Activated T-helper 1 cell treated with anti-CD3 and anti-CD28 coated beads, Interleukin-12 subunit alpha, Interleukin-12 subunit beta, Interleukin-2, Interleukin-4 antibody, amounts not matched to agents 30 ng/mL and 10 ng/mL and 1 ng/mL, durations not matched to agents 14 hours and 24 hours and 36 hours (primary cell): ENCODE measurements at regions of chr1 and their contacts with region 1.

Region 1: GRCh38 chr1:111592389-111593361 is 26.9 kb upstream of the RAP1A start:
- DNase-seq: peak; percentile 84
- H3K4me3 Mint-ChIP-seq: peak overlapping the region; percentile 25
- H3K27ac Mint-ChIP-seq: peak overlapping the region; percentile 91
- H3K4me1 Mint-ChIP-seq: peaks cover 76% of the 10 kb centered on the region
- H3K27me3 Mint-ChIP-seq: peaks cover 2% of the 10 kb centered on the region

Region 2: DNA sequence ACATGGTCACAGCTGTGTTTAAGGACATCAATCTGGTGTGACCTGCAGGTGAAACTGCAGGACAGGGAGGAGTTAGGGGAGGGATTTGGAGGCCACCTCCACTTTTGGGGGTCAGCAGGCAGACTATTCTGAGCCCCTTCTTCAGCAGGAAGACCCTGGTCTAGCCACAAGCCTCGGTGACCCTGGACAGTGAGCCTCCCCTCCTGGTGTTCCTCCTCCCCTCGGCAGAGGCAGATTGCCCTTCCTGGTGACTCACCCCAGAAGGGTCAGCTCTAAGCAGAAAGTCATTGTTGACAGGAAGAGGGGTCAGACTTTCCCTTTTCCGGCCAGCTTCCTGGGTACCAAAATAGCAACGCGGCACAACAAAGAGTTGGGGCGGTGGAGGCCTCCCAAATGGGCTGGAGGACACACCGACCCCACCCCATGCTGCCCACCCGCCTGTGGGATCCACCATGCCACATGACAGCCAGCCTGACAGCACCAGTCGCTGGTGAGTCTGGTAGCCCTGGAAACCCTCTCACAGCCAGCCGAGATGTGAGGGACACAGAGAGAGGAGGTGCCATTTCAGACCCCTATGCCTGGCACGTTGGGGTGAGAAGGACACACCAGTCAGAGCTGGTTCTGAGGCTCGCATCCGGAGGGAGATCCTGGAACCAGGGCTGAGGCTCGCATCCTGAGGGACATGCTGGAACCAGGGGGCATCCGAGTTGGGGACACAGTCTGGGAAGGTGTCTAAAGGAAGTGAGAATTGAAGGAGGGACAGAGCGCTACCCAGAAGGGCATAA is 1696.8 kb before region 1 on chr1:
- intact Hi-C with region 1: loop called (anchors 10 kb)
- DNase-seq: peak; percentile 30
- H3K4me3 Mint-ChIP-seq: no peak overlapping the region
- H3K27ac Mint-ChIP-seq: no peak overlapping the region
- H3K4me1 Mint-ChIP-seq: peaks cover 5% of the 10 kb centered on the region
- H3K27me3 Mint-ChIP-seq: no peaks in the 10 kb centered on the region

Region 3: GRCh38 chr1:111214074-111214801 is 378.4 kb before region 1 on chr1:
- intact Hi-C with region 1: loop called (anchors 2 kb)
- DNase-seq: no peak
- H3K4me3 Mint-ChIP-seq: peak overlapping the region; percentile 64
- H3K27ac Mint-ChIP-seq: peak overlapping the region; percentile 94
- H3K4me1 Mint-ChIP-seq: peaks cover 78% of the 10 kb centered on the region
- H3K27me3 Mint-ChIP-seq: no peaks in the 10 kb centered on the region

Region 4: DNA sequence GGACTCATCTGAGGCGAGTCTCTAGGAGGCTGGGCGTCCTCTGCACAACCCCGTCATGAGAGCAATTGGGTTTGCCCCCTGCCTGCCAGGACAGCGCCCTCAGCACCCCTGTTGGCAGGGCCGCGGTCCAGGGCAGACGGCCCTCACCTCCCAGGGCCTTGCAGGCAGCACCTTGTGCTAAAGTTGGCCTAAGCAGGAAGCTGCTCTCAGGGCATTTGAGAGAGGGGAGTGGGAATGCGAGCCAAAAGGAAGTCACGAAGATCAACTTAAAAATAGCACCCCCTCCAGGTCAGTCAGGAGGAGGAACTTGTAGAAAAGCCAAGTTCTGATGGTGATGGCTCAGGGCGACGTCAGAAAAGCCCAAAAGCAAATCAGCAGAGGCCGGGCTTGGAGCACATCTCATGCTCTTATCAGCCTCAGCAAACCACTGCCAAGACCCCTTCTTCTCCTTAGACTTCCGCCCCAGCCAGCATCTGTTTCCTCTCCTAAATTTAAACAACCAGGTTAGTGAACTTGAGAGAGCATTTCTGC is 76.6 kb before region 1 on chr1:
- intact Hi-C with region 1: loop called (anchors 1 kb)
- DNase-seq: no peak
- H3K4me3 Mint-ChIP-seq: peak overlapping the region; percentile 13
- H3K27ac Mint-ChIP-seq: peak overlapping the region; percentile 63
- H3K4me1 Mint-ChIP-seq: peaks cover 47% of the 10 kb centered on the region
- H3K27me3 Mint-ChIP-seq: peaks cover 2% of the 10 kb centered on the region

Region 5: GRCh38 chr1:111538343-111539025 is 54.2 kb before region 1 on chr1:
- intact Hi-C with region 1: no loop called
- DNase-seq: no peak
- H3K4me3 Mint-ChIP-seq: no peak overlapping the region
- H3K27ac Mint-ChIP-seq: no peak overlapping the region
- H3K4me1 Mint-ChIP-seq: peaks cover 8% of the 10 kb centered on the region
- H3K27me3 Mint-ChIP-seq: peaks cover 6% of the 10 kb centered on the region

Region 6: GRCh38 chr1:111553196-111553595 is 39.5 kb before region 1 on chr1:
- intact Hi-C with region 1: no loop called
- DNase-seq: no peak
- H3K4me3 Mint-ChIP-seq: no peak overlapping the region
- H3K27ac Mint-ChIP-seq: no peak overlapping the region
- H3K4me1 Mint-ChIP-seq: peaks cover 17% of the 10 kb centered on the region
- H3K27me3 Mint-ChIP-seq: peaks cover 32% of the 10 kb centered on the region

Region 7: DNA sequence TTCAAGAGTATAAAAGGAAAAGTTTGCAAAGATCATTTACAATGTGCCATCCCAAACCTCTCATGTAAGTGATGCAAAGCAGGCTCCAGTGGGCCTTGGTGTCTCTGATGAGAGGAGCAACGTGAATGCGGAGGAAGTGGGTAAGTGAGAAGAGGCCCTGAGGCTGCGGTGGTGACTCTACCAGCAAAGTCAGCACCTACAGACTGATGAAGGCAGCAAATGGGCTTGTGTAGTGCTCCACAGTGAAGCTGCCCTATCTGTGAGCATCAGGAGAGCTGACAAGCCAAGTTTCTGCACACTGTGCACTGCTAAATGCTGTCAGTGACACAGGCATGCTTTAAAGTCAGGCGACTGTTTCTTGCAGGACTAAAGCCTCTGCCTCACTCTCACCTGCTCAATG is 11.3 kb after region 1 on chr1:
- intact Hi-C with region 1: loop called (anchors 1 kb)
- DNase-seq: peak; percentile 82
- H3K4me3 Mint-ChIP-seq: peak overlapping the region; percentile 80
- H3K27ac Mint-ChIP-seq: peak overlapping the region; percentile 97
- H3K4me1 Mint-ChIP-seq: peaks cover 74% of the 10 kb centered on the region
- H3K27me3 Mint-ChIP-seq: no peaks in the 10 kb centered on the region

Region 8: DNA sequence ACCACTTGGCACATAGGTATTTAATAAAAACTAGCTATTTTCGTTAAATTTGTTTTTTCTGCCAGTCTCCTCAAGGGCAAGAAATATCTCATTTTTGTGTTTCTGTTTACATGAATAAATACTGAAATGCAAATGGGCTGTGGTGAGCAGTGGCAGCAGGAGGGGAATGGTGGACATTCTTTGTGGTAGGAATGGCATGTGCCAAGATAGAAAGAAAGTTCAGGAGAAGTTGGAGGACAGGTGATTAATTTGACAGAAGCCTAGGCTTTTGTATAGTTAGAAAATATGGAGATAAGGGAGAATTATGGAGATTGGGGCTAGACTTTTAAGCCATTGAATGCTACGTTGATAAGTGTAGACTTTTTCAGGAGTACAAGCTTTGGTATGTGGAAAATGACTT is 35.5 kb after region 1 on chr1:
- intact Hi-C with region 1: loop called (anchors 1 kb)
- DNase-seq: no peak
- H3K4me3 Mint-ChIP-seq: peak overlapping the region; percentile 63
- H3K27ac Mint-ChIP-seq: peak overlapping the region; percentile 75
- H3K4me1 Mint-ChIP-seq: peaks cover 90% of the 10 kb centered on the region
- H3K27me3 Mint-ChIP-seq: no peaks in the 10 kb centered on the region

Region 9: DNA sequence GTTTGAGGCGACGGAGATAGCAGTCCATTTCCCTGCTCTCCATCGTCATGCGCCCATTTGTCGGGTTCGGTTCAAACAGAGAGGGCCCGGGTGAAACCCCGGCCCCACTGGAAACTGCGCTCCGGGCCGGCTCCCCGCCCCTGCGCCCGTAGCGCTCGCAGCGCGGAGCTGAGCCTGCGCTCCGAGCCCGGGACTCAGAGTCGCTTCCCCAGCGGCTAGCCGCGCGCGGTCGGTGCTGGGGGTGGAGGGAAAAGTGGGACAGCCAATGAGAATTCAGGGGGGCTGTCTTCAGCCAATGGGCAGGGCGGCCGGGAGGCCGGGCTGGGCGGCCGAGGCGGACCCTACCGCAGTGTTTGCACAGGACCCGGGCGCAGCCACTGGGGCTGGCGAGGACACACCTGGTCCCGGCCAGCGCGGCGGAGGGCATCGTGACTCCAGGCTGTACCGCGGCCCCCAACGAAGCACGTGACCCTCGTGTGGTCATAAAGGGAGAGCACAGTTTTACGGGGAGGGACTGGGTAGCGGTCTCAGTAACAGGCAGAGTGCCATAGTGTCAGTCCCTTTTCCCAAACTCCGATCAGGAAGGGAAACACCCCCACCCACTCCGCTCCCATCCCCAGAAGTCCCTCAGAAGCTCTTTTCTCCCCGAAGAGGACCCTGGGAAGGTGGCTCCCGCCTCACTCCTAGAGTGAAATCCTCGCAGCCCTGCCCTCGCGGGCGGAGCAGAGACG is 146.7 kb after region 1 on chr1 and contains the start of gene INKA2:
- intact Hi-C with region 1: loop called (anchors 5 kb)
- DNase-seq: peak; percentile 78
- H3K4me3 Mint-ChIP-seq: peak within 1 kb of the TSS; percentile 91
- H3K27ac Mint-ChIP-seq: peak within 1 kb of the TSS; percentile 70
- H3K4me1 Mint-ChIP-seq: peaks cover 17% of the 10 kb centered on the region
- H3K27me3 Mint-ChIP-seq: peaks cover 43% of the 10 kb centered on the region
- total RNA-seq, gene INKA2: 1.3 and 1.7 TPM in 2 replicates